Tibial artery (tissue), 4 donors: ENCODE measurements at regions of chr10 and their contacts with region 1.

Region 1: DNA sequence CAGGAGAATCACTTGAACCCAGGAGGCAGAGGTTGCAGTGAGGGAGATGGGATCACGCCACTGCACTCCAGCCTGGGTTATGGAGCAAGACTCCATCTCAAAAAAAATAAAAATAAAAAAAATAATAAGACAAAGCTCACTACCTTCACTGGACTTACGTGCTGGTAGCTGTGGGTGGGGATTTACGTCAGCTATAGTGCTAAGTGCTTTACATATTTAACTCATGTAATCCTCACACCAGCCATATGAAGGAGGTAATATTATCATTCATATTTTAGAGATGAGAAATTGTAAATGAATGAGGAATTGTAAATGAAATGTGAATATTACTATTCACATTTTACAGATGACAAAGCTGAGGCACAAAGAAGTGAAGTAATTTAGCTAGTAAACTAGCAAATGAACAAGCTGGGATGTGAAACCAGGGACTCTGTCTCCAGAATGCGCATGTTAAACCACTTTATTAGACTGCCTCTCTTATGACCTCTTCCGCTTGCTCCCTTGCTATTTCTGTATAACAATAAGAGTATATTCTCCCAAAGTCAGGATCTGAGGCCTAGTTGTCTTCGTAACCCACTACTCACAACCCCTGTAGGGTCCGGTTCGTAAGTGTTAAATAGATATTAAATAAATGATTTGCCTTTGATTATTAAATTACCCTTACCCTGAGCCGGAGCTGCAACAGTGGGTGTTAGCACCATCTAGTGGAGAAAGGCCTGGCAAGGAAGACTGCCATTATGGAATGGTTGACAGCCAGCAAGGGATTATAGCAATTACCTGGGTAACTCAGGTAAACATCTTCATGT is 70.2 kb downstream of the HTR7 start:
- DNase-seq: no peak
- H3K4me3 ChIP-seq: no peak overlapping the region
- H3K27ac ChIP-seq: no peak overlapping the region
- H3K4me1 ChIP-seq: no peaks in the 10 kb centered on the region
- H3K27me3 ChIP-seq: no peaks in the 10 kb centered on the region
- CTCF ChIP-seq: peak; percentile 50 to 68

Region 2: GRCh38 chr10:92678206-92678605 is 1890.6 kb after region 1 on chr10:
- intact Hi-C with region 1: loop called (anchors 5 kb)
- DNase-seq: no peak
- H3K4me3 ChIP-seq: no peak overlapping the region
- H3K27ac ChIP-seq: no peak overlapping the region
- H3K4me1 ChIP-seq: no peaks in the 10 kb centered on the region
- H3K27me3 ChIP-seq: no peaks in the 10 kb centered on the region
- CTCF ChIP-seq: no peak